GM12878 (cell line): ENCODE measurements at regions of chr7 and their contacts with region 1.

Region 1: GRCh38 chr7:28096713-28097112 is 83.9 kb downstream of the JAZF1 start:
- DNase-seq: peak; percentile 12
- ATAC-seq: peak; percentile 67
- H3K4me3 ChIP-seq: no peak overlapping the region
- H3K27ac ChIP-seq: no peak overlapping the region
- H3K4me1 ChIP-seq: no peaks in the 10 kb centered on the region
- H3K27me3 ChIP-seq: no peaks in the 10 kb centered on the region; a peak in 1 of 4 replicates
- CTCF ChIP-seq: peak; percentile 73 to 78 (median 74)
- EP300 ChIP-seq: no peak
- POLR2A ChIP-seq: no peak
- RAD21 ChIP-seq: peak; percentile 74

Region 2: GRCh38 chr7:28069807-28070206 is 26.9 kb before region 1 on chr7:
- CTCF ChIA-PET with region 1: interaction called, 126 read pairs
- POLR2A ChIA-PET with region 1: no interaction called
- RAD21 ChIA-PET with region 1: interaction called, 3 read pairs
- SMC1A ChIA-PET with region 1: interaction called, 5 read pairs
- in situ Hi-C with region 1: no loop called
- intact Hi-C with region 1: no loop called
- DNase-seq: no peak
- ATAC-seq: no peak
- H3K4me3 ChIP-seq: no peak overlapping the region
- H3K27ac ChIP-seq: no peak overlapping the region
- H3K4me1 ChIP-seq: no peaks in the 10 kb centered on the region
- H3K27me3 ChIP-seq: peaks cover 0 to 2% of the 10 kb centered on the region in 2 experiments; a peak in 3 of 4 replicates
- CTCF ChIP-seq: no peak
- EP300 ChIP-seq: no peak
- POLR2A ChIP-seq: no peak
- RAD21 ChIP-seq: no peak

Region 3: DNA sequence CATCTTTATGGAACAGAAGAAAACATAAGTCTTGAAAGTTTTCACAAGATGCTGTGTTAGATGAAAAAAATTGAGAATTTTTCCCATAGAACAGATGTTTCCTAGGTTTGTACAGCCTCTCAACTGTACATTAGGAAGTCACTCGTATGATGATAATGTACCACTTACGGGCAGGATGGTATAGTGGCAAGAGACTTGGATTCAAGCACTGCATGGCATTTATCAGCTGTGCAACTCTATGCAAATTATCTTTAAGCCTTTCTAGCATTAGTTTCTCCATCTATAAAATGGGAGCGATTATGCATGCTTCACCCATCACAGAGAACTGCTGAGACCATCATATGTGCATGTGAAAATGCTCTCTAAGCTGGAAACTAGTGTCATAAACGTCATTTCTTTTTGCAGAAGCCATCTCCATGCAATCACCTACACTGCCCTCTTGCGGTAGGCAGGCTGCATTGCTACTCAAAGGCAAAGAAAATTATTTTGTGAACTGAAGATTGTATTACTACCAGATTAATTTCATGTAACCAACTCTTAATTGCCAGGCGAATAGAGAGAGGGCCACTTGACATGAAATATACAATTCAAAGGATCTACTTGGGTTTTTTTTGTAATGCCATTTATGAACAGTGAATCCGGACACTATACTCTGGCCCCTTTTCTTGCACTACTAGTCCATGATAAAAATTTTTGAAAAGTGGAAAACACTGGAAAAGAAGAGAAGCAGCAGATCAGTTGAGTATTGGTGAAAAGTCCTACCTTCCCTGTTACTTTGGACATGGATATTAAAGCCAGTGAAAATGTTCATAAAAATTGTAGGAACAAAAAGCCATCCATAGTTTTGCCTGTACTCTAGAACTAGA is 18.4 kb before region 1 on chr7:
- CTCF ChIA-PET with region 1: interaction called, 44 read pairs
- POLR2A ChIA-PET with region 1: no interaction called
- RAD21 ChIA-PET with region 1: interaction called, 6 read pairs
- SMC1A ChIA-PET with region 1: interaction called, 6 read pairs
- in situ Hi-C with region 1: no loop called
- intact Hi-C with region 1: no loop called
- DNase-seq: no peak
- ATAC-seq: peak; percentile 63; the same call in 2 of the 3 replicates
- H3K4me3 ChIP-seq: no peak overlapping the region
- H3K27ac ChIP-seq: no peak overlapping the region
- H3K4me1 ChIP-seq: no peaks in the 10 kb centered on the region
- H3K27me3 ChIP-seq: no peaks in the 10 kb centered on the region; a peak in 3 of 4 replicates
- CTCF ChIP-seq: peak; percentile 88 to 99 (median 96)
- EP300 ChIP-seq: no peak
- POLR2A ChIP-seq: no peak
- RAD21 ChIP-seq: peak; percentile 68

Region 4: DNA sequence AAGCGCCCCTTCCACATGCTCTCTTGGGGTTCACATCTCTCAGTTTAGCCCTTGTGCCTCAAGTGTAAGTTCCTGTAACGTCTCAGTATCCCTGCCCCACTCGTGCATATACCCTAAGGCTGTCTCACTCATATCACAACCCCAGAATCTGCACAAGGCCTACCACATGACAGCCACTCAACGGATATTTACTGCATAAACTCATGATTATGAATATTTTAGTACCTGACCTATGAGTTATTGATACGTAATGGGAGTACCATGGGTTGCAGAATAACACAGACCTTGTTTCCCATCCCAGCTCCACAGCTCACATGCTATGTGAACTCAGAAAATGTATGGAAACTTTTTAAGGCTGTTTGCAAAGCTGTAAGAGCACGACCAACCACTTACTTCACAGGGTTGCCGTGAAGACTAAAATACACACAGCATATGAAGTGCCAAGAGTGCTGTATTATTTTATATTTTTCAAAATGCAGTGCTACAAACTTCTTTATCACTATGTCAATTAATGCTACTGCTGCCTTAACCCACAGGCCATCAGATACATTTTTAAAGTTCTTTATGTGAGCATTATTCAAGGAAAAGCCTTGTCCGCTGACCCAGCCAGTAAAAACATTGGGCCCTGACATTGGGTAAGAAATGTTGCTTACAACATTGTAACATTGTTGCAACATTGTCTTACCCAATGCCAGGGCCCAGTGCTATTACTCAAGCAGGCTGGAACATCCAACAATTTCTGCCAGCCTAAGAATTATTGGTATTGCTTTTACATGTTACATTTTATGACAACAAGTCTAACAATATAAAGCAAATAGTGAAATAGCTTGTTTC is 13.3 kb before region 1 on chr7:
- CTCF ChIA-PET with region 1: interaction called, 44 read pairs
- POLR2A ChIA-PET with region 1: no interaction called
- RAD21 ChIA-PET with region 1: interaction called, 4 read pairs
- SMC1A ChIA-PET with region 1: interaction called, 6 read pairs
- in situ Hi-C with region 1: no loop called
- intact Hi-C with region 1: no loop called
- DNase-seq: no peak
- ATAC-seq: no peak
- H3K4me3 ChIP-seq: no peak overlapping the region
- H3K27ac ChIP-seq: no peak overlapping the region
- H3K4me1 ChIP-seq: no peaks in the 10 kb centered on the region
- H3K27me3 ChIP-seq: no peaks in the 10 kb centered on the region; a peak in 3 of 4 replicates
- CTCF ChIP-seq: no peak
- EP300 ChIP-seq: no peak
- POLR2A ChIP-seq: no peak
- RAD21 ChIP-seq: no peak

Region 5: DNA sequence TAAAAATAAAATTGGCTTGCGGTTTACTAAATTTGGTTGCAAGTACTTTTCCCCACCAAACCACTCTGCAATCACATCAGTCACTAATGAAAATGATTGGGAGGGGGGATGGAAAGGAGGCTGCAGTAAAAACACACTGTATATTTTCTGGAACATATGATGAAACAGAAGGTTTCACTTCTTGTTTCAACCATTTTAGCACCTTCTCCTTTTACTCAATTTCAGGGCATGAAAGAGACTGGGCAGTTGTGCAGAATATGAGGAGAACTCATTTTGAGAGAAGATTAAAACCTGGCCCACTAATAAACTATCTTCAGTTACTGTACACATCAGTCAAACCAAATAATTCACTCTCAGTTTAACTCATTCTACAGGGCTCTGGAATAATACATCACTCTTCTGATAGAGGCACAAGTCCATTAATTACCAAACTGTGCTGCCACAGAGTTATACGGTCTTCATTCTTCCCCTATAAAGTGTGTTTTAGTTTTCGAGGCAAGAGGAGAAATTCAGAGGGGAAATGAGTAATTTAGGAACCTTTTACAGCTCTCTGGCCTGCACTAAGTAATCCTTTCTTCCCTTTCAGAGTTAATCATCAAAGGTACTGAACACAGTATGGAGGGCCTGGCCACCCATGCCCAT is 58.4 kb after region 1 on chr7:
- CTCF ChIA-PET with region 1: no interaction called
- POLR2A ChIA-PET with region 1: no interaction called
- RAD21 ChIA-PET with region 1: no interaction called
- SMC1A ChIA-PET with region 1: no interaction called
- in situ Hi-C with region 1: no loop called
- intact Hi-C with region 1: no loop called
- DNase-seq: peak; percentile 78
- ATAC-seq: peak; percentile 88
- H3K4me3 ChIP-seq: no peak overlapping the region
- H3K27ac ChIP-seq: no peak overlapping the region
- H3K4me1 ChIP-seq: peaks cover 22% of the 10 kb centered on the region
- H3K27me3 ChIP-seq: peaks cover 0 to 2% of the 10 kb centered on the region in 2 experiments; a peak in 1 of 4 replicates
- CTCF ChIP-seq: no peak
- EP300 ChIP-seq: peak; percentile 89
- POLR2A ChIP-seq: no peak
- RAD21 ChIP-seq: no peak